ENCODE measurements at regions of chr10 and their contacts with region 1.

Region 1: DNA sequence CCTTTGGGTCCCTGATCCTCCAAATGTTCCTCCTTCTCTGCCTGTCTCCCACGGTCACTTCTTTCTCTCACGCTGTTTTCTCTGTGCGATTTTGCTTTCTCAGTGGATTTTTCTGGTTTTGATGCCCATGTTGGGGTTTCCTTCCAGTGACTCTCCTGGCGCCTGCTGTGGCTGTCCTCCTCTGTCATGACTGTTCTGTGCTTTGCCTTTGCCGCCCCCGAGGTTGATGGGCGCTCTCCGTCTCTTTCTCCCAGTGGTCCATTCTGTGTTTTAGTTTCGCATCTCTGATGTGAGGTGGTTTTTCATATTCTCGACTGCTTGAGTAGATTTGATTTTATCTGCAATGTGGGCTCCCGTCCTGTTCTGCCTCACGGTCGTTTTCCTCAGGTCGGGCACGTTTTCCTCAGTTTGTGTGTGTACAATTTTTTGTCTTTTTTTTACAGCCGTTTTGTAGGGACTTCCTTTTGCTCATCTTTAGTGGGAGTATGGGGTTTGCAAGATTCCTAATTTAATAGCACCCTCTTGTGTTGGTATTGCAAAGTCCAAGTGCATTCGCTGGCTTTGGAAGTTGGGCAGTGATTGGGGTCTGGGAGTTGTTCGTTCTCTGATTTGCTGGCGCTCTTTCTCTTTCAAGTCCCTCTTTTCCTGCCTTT is 100.0 kb downstream of the INPP5A start:
- DNase-seq: peak in 1 of 2 donors; percentile 14
- ATAC-seq: peak; percentile 48

Region 2: GRCh38 chr10:132396495-132397035 is 241.0 kb before region 1 on chr10:
- intact Hi-C with region 1: loop called in 1 of 2 experiments (anchors 10 kb)
- DNase-seq: peak; percentile 66 to 78
- ATAC-seq: peak; percentile 28

Region 3: GRCh38 chr10:132458593-132459300 is 178.9 kb before region 1 on chr10:
- intact Hi-C with region 1: loop called (anchors 2 to 10 kb)
- DNase-seq: peak; percentile 77 to 94
- ATAC-seq: peak; percentile 69

Region 4: GRCh38 chr10:132536971-132537712 is 100.5 kb before region 1 on chr10:
- intact Hi-C with region 1: loop called in 1 of 2 experiments (anchors 10 kb)
- DNase-seq: peak; percentile 100
- ATAC-seq: peak; percentile 90